Activated CD8-positive, alpha-beta memory T cell treated with anti-CD3 and anti-CD28 coated beads, Interleukin-2, amount 10 ng/mL, durations not matched to agents 7 days and 5 days (primary cell): ENCODE measurements at regions of chr19 and their contacts with region 1.

Region 1: DNA sequence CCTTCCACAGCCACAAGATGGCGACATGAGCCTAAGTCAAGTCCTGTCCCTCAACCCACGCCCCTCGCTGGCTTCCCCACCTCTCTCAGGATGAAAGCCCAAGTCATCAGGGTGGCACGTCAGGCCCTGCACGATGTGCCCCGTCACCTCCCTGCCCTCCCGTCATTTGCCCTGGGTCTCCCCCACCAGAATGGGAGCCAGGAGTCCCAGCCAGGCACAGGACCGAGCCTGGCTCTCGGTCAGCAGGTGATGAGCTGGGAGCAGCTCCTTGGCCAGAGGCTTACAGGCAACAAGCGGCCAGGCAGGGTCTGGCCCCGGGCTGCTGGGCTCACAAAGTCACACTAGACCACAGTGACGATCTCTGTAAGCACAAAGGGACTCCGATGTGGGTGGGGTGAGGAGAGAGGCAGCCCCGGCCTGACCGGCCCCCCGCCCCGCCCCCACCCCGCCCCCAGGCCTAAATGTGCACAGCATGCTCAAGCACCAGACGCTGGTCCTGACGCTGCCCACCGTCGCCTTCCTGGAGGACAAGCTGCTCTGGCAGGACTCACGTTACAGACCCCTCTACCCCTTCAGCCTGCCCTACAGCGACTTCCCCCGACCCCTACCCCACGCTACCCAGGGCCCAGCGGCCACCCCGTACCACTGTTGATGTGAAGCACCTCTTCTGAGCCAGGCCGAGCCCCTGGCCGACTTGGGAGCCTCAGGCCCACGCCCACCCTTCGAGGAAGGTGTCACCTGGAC is 7.3 kb downstream of the MRPL4 start:
- DNase-seq: peak; percentile 96
- ATAC-seq: peak; percentile 78
- H3K4me3 Mint-ChIP-seq: no peak overlapping the region
- H3K27ac Mint-ChIP-seq: peak overlapping the region; percentile 67
- H3K4me1 Mint-ChIP-seq: peaks cover 37% of the 10 kb centered on the region
- H3K27me3 Mint-ChIP-seq: no peaks in the 10 kb centered on the region

Region 2: GRCh38 chr19:10292206-10292788 is 33.0 kb after region 1 on chr19:
- CTCF ChIA-PET with region 1: interaction called, 20 read pairs
- DNase-seq: peak; percentile 87
- ATAC-seq: peak; percentile 67
- H3K4me3 Mint-ChIP-seq: peak overlapping the region; percentile 68
- H3K27ac Mint-ChIP-seq: peak overlapping the region; percentile 24
- H3K4me1 Mint-ChIP-seq: peaks cover 64% of the 10 kb centered on the region
- H3K27me3 Mint-ChIP-seq: peaks cover 81% of the 10 kb centered on the region

Region 3: GRCh38 chr19:10344780-10345179 is 85.4 kb after region 1 on chr19:
- CTCF ChIA-PET with region 1: interaction called, 10 read pairs
- DNase-seq: no peak
- ATAC-seq: no peak
- H3K4me3 Mint-ChIP-seq: no peak overlapping the region
- H3K27ac Mint-ChIP-seq: no peak overlapping the region
- H3K4me1 Mint-ChIP-seq: peaks cover 9% of the 10 kb centered on the region
- H3K27me3 Mint-ChIP-seq: no peaks in the 10 kb centered on the region

Region 4: DNA sequence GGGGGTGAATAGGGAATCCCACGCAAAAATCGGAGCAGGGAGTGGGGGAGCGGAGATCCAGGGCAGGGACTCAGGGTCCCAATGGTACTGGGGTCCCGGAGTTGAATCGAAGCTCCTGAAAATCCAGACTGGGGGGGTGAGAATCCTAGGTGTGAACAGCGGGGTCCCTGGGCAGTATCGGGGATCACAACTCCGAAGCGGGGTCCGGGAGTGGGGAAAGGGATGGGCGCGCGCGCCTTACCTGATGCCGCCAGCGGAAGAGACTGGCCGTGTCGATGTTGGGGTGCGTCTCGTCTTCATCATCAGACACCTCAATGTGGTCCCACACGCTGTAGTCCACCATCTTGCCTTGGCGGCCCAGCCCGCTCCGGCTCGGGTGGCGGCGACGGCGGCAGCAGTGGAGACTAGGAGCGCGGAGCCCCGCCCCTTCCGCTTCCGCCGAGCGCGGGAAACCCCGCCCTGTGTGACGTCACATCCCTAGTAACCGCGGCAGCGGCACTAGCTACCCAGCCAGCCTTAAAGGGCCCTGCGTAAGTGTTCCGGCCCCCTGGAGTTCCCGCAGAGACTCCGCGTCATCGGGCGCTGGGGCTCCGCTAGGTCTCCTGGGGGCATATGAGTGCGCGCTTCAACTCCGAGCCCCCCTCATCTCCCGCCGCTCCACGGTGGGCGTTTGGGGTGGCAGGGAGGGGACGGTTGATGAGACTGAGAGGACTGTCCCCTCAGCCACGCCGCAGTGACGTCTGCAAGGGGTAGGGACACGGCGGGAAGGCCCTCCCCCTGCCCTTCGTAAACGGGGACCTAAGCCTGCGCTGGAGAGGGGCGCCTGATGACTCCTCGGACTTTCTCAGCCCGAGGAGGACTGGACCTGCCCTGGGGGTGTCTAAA is 144.0 kb after region 1 on chr19 and contains the start of gene CDC37:
- CTCF ChIA-PET with region 1: interaction called, 53 read pairs
- DNase-seq: peak; percentile 98
- ATAC-seq: peak; percentile 71
- H3K4me3 Mint-ChIP-seq: peak within 1 kb of the TSS; percentile 97
- H3K27ac Mint-ChIP-seq: peak within 1 kb of the TSS; percentile 93
- H3K4me1 Mint-ChIP-seq: peaks cover 60% of the 10 kb centered on the region
- H3K27me3 Mint-ChIP-seq: no peaks in the 10 kb centered on the region
- total RNA-seq, gene CDC37: 283 to 309 TPM